T-cell (primary cell): ENCODE measurements at regions of chr2 and their contacts with region 1.

Region 1: GRCh38 chr2:192729369-192729768 is 534.6 kb upstream of the TMEFF2 start:
- DNase-seq: no peak
- ATAC-seq: no peak
- H3K4me3 ChIP-seq: no peak overlapping the region
- H3K4me3 Mint-ChIP-seq: no peak overlapping the region
- H3K27ac ChIP-seq: no peak overlapping the region
- H3K27ac Mint-ChIP-seq: no peak overlapping the region
- H3K4me1 ChIP-seq: no peaks in the 10 kb centered on the region
- H3K4me1 Mint-ChIP-seq: no peaks in the 10 kb centered on the region
- H3K27me3 ChIP-seq: no peaks in the 10 kb centered on the region
- H3K27me3 Mint-ChIP-seq: no peaks in the 10 kb centered on the region

Region 2: GRCh38 chr2:192574552-192574951 is 154.8 kb before region 1 on chr2:
- CTCF ChIA-PET with region 1: interaction called in 1 of 2 experiments, 10 read pairs
- POLR2A ChIA-PET with region 1: no interaction called
- DNase-seq: no peak
- ATAC-seq: no peak
- H3K4me3 ChIP-seq: no peak overlapping the region
- H3K4me3 Mint-ChIP-seq: no peak overlapping the region
- H3K27ac ChIP-seq: no peak overlapping the region
- H3K27ac Mint-ChIP-seq: no peak overlapping the region
- H3K4me1 ChIP-seq: no peaks in the 10 kb centered on the region
- H3K4me1 Mint-ChIP-seq: no peaks in the 10 kb centered on the region
- H3K27me3 ChIP-seq: no peaks in the 10 kb centered on the region
- H3K27me3 Mint-ChIP-seq: no peaks in the 10 kb centered on the region

Region 3: GRCh38 chr2:192675640-192676039 is 53.7 kb before region 1 on chr2:
- CTCF ChIA-PET with region 1: no interaction called
- POLR2A ChIA-PET with region 1: no interaction called
- DNase-seq: no peak
- ATAC-seq: no peak
- H3K4me3 ChIP-seq: no peak overlapping the region
- H3K4me3 Mint-ChIP-seq: no peak overlapping the region
- H3K27ac ChIP-seq: no peak overlapping the region
- H3K27ac Mint-ChIP-seq: no peak overlapping the region
- H3K4me1 ChIP-seq: no peaks in the 10 kb centered on the region
- H3K4me1 Mint-ChIP-seq: no peaks in the 10 kb centered on the region
- H3K27me3 ChIP-seq: no peaks in the 10 kb centered on the region
- H3K27me3 Mint-ChIP-seq: no peaks in the 10 kb centered on the region